Tibial artery (tissue), 4 donors: ENCODE measurements at regions of chr9 and their contacts with region 1.

Region 1: DNA sequence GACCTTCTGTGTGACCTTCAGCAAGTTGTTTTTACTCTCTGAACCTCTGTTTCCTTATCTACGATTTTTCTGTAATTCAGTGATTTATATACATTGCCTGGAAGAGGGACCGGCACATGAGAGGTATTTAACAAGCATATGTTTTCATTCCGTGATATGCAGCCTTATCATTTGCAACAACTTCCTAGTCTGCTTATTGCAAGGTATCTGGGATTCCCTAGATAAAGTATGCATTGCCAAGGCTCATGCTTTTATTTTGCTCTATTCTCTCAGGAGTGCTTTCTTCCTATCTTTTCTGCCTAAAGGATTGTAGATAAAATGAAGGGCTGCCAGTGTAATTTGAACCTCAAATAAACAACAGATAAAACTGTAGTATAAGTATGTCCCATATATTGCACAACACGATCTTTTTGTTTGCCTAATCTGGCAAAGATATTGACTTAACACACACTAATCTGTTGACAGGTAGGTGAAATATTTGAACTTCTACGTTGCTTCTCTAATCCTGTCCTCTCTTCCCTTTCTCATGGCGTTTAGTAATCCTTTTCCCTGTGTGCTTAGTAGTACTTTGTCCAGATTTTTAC is 377.2 kb upstream of the TNC start:
- DNase-seq: no peak
- H3K4me3 ChIP-seq: no peak overlapping the region
- H3K27ac ChIP-seq: peak overlapping the region; percentile 80 to 86
- H3K4me1 ChIP-seq: peaks cover 0 to 58% (median 20%) of the 10 kb centered on the region in 4 donors
- H3K27me3 ChIP-seq: no peaks in the 10 kb centered on the region
- CTCF ChIP-seq: no peak

Region 2: GRCh38 chr9:115213818-115214334 is 281.3 kb before region 1 on chr9:
- intact Hi-C with region 1: no loop called
- DNase-seq: no peak
- H3K4me3 ChIP-seq: no peak overlapping the region
- H3K27ac ChIP-seq: no peak overlapping the region
- H3K4me1 ChIP-seq: peaks cover 0 to 3% (median under 1%) of the 10 kb centered on the region in 4 donors
- H3K27me3 ChIP-seq: no peaks in the 10 kb centered on the region
- CTCF ChIP-seq: no peak

Region 3: DNA sequence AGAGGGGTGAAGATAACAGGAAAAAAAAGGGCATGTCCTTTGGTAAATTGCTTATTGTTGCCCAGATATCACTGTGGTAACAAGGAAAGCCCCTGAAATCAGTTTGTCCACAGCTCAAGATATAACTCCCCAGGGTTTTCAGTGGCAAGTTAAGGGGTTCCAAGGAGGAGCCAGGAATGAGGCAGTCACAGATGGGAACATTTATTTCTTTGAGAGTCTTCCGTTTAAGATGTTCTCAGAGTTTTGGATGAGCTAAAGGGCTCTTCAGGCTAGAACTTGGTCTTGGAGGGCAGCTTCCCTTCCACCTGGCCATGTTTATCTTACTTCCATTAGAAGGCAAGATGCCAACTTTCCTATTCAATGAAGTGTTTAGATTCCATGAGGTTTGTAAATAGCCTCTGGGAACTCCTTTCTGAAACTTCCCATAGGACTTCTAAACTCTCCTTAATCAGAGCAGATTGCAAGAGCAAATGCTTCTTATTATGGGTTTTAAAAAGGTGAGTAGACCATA is 99.6 kb before region 1 on chr9:
- intact Hi-C with region 1: loop called (anchors 10 kb)
- DNase-seq: no peak
- H3K4me3 ChIP-seq: no peak overlapping the region
- H3K27ac ChIP-seq: peak overlapping the region; percentile 87 to 89
- H3K4me1 ChIP-seq: peaks cover 0 to 46% (median 18%) of the 10 kb centered on the region in 4 donors
- H3K27me3 ChIP-seq: no peaks in the 10 kb centered on the region
- CTCF ChIP-seq: no peak